ENCODE measurements at regions of chr5 and their contacts with region 1.

Region 1: DNA sequence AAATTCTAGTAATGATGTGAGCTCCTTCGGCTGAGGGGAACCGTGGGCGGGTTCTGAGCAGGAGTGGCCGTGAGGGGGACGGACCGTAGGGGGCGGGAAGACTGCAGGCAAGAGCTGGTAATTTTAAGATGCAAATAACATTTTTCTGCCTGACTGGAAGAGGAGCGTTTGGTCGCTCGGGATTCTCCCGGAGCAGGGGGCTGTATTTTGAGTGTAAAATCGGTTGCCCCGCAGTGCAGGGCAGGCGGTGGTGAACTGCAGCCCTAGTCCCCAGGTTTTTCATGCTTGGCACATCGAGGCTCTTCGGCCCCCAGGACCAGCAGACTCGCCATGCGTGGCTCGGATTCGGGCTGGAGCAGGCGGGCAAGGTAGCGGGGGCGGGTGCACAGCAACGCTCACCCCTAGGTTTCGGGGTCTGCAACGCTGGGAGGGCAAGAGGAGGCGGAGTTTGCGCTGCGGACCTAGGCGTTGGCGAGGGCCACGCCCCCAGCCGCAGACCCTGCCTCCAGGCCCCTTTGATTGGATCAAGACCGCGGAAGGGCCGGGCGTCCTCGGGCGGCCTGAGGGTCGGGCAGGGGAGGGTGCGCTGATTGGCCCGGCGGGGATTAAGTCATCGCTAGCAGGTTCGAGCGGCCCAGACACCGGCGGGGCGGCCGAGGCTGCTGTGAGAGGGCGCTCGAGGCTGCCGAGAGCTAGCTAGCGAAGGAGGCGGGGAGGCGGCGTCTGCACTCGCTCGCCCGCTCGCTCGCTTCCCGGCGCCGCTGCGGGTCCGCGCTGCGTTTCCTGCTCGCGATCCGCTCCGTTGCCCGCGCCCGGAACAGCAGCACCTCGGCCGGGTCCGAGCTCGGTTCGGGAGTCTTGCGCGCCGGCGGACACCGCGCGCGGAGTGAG is at the start of gene ARHGAP26:
- DNase-seq: peak; percentile 93 to 100 (median 98)
- ATAC-seq: peak; percentile 98
- H3K4me3 ChIP-seq: peak within 1 kb of the TSS; percentile 79 to 93
- H3K27ac ChIP-seq: peak within 1 kb of the TSS; percentile 81 to 92
- H3K4me1 ChIP-seq: peaks cover 10 to 43% of the 10 kb centered on the region in 2 donors
- H3K27me3 ChIP-seq: no peaks in the 10 kb centered on the region
- CTCF ChIP-seq: peak in 1 of 2 donors; percentile 21
- polyA plus RNA-seq, gene ARHGAP26: 13.9 to 15.7 (median 14.7) TPM

Region 2: DNA sequence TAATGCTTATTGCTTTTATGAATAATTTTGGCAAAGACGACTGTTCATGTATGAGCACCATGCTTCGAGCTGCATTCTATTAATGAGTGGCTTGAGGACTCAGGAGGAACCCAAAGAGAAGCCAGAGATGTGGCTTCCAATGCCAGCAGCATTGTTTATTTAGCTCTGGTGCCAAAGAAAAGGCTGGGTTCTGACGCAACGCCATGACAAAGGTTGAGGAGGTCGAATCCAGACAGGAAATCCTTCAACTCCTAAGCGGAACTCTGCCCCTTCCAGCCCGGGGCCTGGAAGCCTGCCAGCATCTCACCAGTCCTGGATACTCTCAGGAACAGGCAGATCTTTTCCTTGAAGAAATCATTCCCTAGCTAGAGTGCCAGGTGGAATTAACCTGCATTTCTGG is 104.6 kb after region 1 on chr5:
- intact Hi-C with region 1: loop called in 1 of 2 experiments (anchors 10 kb)
- DNase-seq: peak in 3 of 4 donors; percentile 48 to 89 (median 84)
- ATAC-seq: peak; percentile 65
- H3K4me3 ChIP-seq: no peak overlapping the region
- H3K27ac ChIP-seq: peak overlapping the region; percentile 49 to 53
- H3K4me1 ChIP-seq: peaks cover 18 to 62% of the 10 kb centered on the region in 2 donors
- H3K27me3 ChIP-seq: no peaks in the 10 kb centered on the region
- CTCF ChIP-seq: no peak

Measured in left lung (tissue), 14 donors.